Cardiac septum (tissue), 1 donor: ENCODE measurements at regions of chr6 and their contacts with region 1.

Region 1: DNA sequence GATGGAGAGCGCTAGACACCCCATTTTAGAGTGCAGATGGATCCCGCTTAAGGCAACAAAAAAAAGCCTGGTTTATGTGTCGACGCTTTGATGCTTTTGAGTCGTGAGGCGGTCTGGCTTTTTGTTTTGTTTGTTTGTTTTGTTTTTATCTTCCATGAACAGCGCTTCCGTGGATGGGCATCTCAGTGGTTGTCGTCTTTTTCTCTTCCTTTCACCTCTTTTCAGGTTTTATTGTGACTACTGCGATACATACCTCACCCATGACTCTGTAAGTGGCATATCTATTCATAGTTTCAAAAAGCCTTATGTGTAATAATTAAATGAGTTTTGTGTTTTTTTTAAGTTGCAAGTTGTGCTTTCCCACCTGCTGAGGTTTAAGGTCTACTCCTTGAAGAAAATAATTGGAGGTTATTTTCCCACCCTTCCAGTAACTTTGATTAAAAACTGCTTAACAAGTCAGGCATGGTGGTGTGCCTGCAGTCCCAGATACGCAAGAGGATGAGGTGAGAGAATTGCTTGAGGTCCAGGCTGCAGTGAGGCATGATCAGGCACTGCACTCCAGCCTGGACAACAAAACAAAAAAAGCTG is 476 bp downstream of the SNRPC start:
- DNase-seq: no peak

Region 2: GRCh38 chr6:34696739-34697543 is 60.8 kb before region 1 on chr6 and contains the start of gene ILRUN:
- intact Hi-C with region 1: loop called (anchors 5 kb)
- DNase-seq: peak; percentile 99
- total RNA-seq, gene ILRUN: 104 TPM

Region 3: GRCh38 chr6:34791701-34792235 is 34.0 kb after region 1 on chr6 and contains the start of gene BLTP3A:
- intact Hi-C with region 1: loop called (anchors 5 kb)
- DNase-seq: peak; percentile 83
- total RNA-seq, gene BLTP3A: 18.1 TPM

Region 4: GRCh38 chr6:34867484-34867883 is 109.7 kb after region 1 on chr6:
- intact Hi-C with region 1: loop called (anchors 10 kb)
- DNase-seq: no peak

Region 5: DNA sequence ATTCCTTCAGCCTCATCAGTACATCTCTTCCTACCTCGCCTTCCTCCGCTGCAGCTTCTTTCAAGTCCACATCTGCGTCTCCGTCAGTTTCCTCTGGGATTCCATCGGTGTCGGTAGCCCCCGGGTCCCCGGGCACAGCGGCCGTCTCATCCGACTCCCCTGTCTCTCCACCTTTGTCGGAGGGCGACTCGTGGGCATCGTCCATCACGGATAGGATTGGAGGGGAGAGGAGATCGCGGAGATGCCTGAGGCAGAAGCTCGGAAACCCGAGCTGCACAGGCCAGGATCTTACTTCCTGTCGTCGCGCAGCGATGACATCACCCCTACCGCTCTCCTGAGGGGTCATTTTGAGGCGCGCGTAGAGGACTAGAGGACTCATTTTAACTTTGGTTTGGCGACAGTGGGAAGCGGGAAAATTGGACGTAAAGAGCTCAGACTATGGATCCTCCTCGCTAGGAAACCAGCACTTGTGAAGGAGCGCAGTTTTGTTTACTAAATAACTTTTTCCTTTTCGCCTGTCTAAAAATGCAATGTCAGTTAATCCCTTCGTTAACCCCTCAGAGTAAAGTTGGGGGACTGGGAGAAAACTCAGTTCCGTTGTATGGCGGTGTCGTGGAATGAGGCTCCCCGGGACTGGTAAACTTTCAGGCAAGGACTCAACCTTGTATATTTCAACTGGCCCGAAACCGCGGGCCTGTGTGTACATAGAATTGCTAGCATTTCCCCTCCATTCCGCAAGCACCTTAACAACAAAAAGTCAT is 130.2 kb after region 1 on chr6 and contains the start of gene TAF11:
- intact Hi-C with region 1: loop called (anchors 5 kb)
- DNase-seq: peak; percentile 95
- total RNA-seq, gene TAF11: 20.0 TPM